ENCODE measurements at regions of chr12 and their contacts with region 1.

Region 1: GRCh38 chr12:51341259-51342007 is 5.0 kb downstream of the CELA1 start:
- DNase-seq: peak; percentile 52 to 66
- H3K4me3 ChIP-seq: no peak overlapping the region
- H3K27ac ChIP-seq: no peak overlapping the region
- H3K4me1 ChIP-seq: peaks cover 8% of the 10 kb centered on the region
- H3K27me3 ChIP-seq: no peaks in the 10 kb centered on the region
- CTCF ChIP-seq: peak; percentile 99

Region 2: DNA sequence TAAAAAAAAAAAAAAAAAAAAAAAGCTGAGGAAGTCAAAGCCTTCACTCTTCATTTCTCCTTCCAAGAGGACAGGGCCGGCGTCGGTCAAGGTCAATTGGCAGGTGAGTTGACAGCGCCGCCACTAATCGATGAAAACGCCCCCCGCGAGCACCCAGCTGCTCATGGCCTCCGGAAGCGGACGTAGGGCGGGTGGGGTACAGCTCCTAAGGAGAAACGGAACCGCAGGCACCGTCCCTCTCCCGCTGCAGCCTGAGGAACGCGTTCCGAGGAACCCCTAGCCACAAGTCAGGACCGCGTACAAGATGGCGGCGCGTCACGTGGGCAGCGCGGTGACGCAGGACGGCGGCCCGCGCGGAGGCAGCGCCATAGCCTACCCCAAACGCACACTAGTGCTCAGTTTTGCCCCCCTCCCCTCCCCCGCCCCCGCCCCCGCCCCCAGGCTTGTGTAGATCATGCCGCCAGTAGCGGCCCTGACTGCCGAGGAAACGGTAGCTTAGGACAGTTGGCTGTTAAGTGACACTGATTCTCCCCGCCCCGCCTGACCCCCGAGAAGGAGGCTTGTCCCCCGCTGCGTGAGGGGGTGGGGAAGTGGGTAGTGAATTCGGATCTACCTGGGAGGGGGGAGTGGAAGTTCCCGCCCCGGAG is 577.7 kb before region 1 on chr12 and contains the start of gene ATF1:
- CTCF ChIA-PET with region 1: no interaction called
- POLR2A ChIA-PET with region 1: no interaction called
- intact Hi-C with region 1: loop called (anchors 10 kb)
- DNase-seq: peak; percentile 79 to 86
- H3K4me3 ChIP-seq: peak within 1 kb of the TSS; percentile 88
- H3K27ac ChIP-seq: peak within 1 kb of the TSS; percentile 92
- H3K4me1 ChIP-seq: peaks cover 27% of the 10 kb centered on the region
- H3K27me3 ChIP-seq: no peaks in the 10 kb centered on the region
- CTCF ChIP-seq: no peak
- total RNA-seq, gene ATF1: 29.8 and 37.9 TPM in 2 replicates

Region 3: DNA sequence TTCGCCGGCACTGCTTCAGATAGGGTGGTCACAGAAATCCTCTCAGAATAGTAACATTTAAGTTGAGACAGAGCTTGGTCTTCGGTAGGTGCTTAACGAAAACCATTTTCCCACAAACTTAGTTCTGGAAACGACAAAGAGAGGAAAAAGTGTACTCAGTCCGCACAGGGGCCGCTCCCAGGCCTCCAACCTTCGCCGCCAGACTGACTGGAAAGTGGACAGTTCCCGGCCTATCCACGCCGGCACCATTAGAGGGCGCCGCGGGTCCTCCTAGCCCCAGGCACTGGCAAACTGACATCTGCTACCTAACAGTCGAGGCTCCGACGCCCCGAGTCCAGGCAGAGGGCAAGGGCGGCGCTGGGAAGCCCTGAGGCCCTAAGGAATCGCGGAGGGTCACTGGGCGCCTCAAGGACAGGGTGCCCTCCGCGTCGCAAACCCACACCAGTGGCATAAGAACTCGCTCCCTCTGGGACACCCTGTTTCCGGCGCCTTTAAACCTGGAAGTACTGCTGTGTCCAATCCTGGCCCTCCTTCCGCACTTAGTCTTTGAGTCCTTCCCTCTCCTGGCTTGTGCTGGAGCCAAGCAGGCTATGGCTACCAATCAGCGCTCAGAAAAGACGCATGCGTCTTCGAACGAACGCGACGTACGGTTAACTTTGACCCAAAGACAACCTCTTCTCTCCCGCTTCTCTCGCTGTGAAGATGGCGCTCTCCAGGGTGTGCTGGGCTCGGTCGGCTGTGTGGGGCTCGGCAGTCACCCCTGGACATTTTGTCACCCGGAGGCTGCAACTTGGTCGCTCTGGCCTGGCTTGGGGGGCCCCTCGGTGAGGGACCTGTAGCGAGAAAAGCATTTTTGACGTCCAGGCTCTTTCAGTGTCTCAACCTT is 293.5 kb before region 1 on chr12 and contains the start of gene LETMD1:
- CTCF ChIA-PET with region 1: interaction called, 3 read pairs
- POLR2A ChIA-PET with region 1: no interaction called
- intact Hi-C with region 1: loop called (anchors 1 kb)
- DNase-seq: peak; percentile 89 to 96
- H3K4me3 ChIP-seq: peak within 1 kb of the TSS; percentile 94
- H3K27ac ChIP-seq: peak within 1 kb of the TSS; percentile 67
- H3K4me1 ChIP-seq: peaks cover 19% of the 10 kb centered on the region
- H3K27me3 ChIP-seq: no peaks in the 10 kb centered on the region
- CTCF ChIP-seq: peak; percentile 91
- total RNA-seq, gene LETMD1: 81.9 and 87.4 TPM in 2 replicates

Region 4: DNA sequence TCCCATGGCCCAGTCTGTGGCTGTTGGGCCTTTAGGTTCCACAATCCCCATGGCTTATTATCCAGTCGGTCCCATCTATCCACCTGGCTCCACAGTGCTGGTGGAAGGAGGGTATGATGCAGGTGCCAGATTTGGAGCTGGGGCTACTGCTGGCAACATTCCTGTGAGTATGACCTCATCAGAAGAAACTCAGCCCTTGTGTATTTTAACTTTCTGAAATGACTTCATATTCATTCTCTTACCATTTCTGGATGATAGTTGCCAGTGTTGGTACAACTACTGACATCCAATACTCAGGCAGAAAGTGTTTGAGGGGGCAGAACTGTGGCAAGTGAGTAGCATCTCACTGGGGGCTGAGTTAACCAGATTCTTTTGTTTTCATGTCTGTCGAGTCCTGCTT is 100.5 kb before region 1 on chr12:
- CTCF ChIA-PET with region 1: no interaction called
- POLR2A ChIA-PET with region 1: no interaction called
- intact Hi-C with region 1: no loop called
- DNase-seq: peak in 1 of 2 experiments; percentile 52
- H3K4me3 ChIP-seq: no peak overlapping the region
- H3K27ac ChIP-seq: peak overlapping the region; percentile 11; the same call in 1 of the 2 replicates
- H3K4me1 ChIP-seq: peaks cover 20% of the 10 kb centered on the region
- H3K27me3 ChIP-seq: no peaks in the 10 kb centered on the region
- CTCF ChIP-seq: no peak

Region 5: DNA sequence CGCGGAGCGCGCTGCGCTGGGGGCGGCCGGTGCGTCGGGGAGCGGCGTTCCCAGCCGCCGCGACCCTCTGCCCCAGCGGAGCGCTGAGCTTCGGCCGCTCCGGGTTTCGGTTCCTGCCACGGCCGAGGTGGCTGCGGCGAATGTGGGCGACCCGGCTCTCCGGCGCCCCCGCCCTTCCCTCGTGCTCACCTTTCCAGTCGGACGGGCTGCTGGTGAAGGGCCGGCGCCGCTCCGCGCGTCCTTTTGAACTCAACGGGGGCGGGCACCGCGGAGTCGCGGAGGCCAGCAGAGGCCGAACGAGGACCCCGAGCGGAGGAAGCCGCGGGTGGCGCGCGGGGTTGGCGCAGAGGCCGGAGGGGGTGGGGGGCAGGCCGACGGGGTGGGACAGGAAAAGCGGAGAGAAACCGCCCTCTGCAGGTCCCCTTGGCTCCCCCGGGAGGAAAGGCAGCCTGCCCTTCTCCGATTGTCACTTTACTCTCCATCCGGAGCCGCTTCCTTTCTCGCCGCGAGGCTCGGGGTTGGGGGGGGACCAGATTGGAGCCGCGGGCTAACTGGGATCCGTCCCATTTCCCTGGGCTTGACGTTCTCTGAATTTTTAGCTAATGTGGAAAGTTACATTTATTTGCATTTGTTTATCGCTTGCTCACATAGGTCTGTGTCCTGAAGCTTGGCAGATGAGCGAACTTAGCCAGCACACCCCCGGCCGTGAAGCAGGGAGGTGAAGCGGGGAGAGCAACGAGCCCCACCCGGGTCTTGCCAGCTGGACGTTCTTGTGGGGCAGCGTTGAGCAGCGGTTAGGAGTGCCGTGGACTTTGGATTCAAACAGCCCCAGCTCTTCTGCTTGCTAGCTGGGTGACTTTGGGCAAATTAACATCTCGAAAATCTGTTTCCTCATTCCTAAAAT is 71.1 kb before region 1 on chr12 and contains the start of gene SMAGP:
- CTCF ChIA-PET with region 1: interaction called, 10 read pairs
- POLR2A ChIA-PET with region 1: interaction called, 4 read pairs
- intact Hi-C with region 1: loop called (anchors 1 kb)
- DNase-seq: peak; percentile 73 to 92
- H3K4me3 ChIP-seq: peak within 1 kb of the TSS; percentile 91
- H3K27ac ChIP-seq: peak within 1 kb of the TSS; percentile 95
- H3K4me1 ChIP-seq: peaks cover 36% of the 10 kb centered on the region
- H3K27me3 ChIP-seq: no peaks in the 10 kb centered on the region
- CTCF ChIP-seq: no peak
- total RNA-seq, gene SMAGP: 36.3 and 42.9 TPM in 2 replicates

Region 6: DNA sequence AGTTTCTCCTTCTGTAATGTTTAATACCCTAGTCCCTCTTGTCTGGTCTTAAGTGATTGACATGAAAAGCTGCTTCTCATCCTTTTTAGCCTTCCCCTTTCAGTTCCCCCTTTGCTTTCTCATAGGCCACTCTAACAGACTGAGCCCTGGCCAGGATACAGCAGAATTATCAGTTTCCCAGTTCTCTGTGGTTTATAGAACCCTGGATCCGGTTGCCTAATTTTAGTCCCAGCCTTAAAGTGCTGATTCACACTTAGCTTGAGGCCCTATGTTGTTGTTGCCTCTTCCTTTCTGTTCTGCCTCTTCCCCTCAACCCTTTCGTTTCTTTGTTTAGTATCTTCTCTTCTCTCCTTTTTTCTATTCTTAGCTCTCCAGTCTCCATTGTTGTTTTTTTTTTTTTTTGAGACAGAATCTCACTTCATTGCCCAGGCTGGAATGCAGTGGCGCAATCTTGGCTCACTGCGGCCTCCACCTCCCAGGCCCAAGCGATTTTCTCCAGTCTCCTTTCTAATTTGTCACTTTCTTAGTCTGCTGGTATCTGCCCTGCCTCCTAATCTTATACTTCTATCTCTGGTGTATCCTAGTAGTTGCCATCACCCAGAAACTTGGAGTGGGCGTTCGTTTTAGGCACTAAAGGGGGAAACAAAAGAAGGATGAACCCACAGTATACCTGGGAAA is 14.5 kb before region 1 on chr12:
- CTCF ChIA-PET with region 1: interaction called, 16 read pairs
- POLR2A ChIA-PET with region 1: interaction called, 3 read pairs
- intact Hi-C with region 1: no loop called
- DNase-seq: peak; percentile 53
- H3K4me3 ChIP-seq: no peak overlapping the region
- H3K27ac ChIP-seq: peak overlapping the region; percentile 72
- H3K4me1 ChIP-seq: peaks cover 53% of the 10 kb centered on the region
- H3K27me3 ChIP-seq: no peaks in the 10 kb centered on the region
- CTCF ChIP-seq: no peak

Region 7: DNA sequence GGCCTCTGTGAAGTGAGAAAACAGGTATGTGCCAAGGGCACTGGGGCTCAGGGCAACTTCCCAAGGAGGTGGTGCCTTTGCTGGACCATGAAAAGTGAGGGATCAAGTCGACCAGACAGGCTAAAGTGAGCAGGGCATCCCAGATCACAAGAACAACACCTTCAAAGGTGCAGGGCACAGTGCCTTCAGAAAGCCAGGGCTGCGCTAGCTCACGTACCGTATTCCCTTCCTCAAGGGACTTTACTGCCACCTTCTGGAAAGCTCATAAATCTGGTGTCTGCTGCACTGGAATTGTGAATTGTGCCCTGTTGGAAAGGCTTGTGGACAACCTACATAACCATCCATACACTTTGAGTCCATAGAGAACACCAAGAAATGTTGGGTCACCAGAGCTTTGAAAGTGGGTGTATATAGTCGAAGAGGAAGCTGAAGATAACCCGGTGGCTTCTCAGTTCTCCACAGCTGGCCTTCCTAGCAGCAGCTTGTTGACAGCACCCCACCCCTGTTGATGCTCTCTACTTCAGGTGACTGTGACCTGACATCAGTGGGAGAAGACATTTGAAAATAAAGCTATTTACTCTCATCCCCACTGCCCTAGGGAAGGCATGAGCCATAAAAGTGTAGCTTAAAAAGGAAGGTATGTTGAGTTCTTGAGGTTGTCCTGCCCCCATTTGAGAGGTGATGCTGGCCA is 482.6 kb after region 1 on chr12:
- CTCF ChIA-PET with region 1: interaction called, 3 read pairs
- POLR2A ChIA-PET with region 1: no interaction called
- intact Hi-C with region 1: loop called (anchors 5 kb)
- DNase-seq: peak; percentile 30 to 39
- H3K4me3 ChIP-seq: no peak overlapping the region
- H3K27ac ChIP-seq: no peak overlapping the region
- H3K4me1 ChIP-seq: no peaks in the 10 kb centered on the region
- H3K27me3 ChIP-seq: peaks cover 22% of the 10 kb centered on the region
- CTCF ChIP-seq: peak; percentile 61